ENCODE measurements at regions of chr7 and their contacts with region 1.

Region 1: GRCh38 chr7:12194426-12194825 is 16.7 kb upstream of the TMEM106B start:
- DNase-seq: no peak
- ATAC-seq: no peak

Region 2: GRCh38 chr7:12119620-12120303 is 74.7 kb before region 1 on chr7:
- intact Hi-C with region 1: no loop called
- DNase-seq: no peak
- ATAC-seq: no peak

Region 3: GRCh38 chr7:12239806-12240205 is 45.4 kb after region 1 on chr7:
- intact Hi-C with region 1: loop called (anchors 2 kb)
- DNase-seq: no peak
- ATAC-seq: no peak